ENCODE measurements at regions of chr5 and their contacts with region 1.

Region 1: DNA sequence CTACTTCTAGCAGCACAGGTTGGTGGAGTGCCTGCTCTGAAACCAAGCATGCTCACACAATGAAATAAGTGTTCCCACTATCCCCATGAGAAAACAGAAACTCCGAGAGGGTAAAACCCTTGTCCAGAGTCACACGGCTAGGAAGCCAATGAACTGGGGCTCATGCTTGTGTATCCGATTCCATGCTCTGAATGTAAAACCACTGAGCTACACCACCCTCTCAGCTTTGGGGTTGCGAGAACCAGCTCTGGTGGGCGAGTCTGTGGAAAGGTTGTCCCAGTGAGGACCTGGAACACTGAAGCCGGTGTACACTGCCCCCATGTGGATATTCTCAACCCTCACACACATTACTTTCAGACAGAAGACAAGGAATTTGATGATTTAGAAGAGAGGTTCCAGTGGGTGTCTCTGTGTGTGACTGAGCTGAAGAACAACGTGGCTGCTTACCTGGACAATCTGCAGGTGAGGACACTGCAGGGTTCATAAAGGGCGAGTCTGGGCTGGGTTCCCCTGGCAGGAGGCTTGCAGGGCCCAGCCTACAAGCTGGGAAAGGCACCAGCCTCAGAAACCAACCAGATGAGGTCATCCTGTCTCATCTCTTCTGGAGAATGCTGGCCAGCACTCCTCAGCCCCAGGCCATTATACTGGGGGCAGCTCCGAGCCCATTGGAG is 37.4 kb downstream of the ARHGEF37 start:
- DNase-seq: no peak
- H3K4me3 ChIP-seq: no peak overlapping the region
- CTCF ChIP-seq: peak; percentile 72

Region 2: GRCh38 chr5:149581192-149581861 is 37.4 kb before region 1 on chr5 and contains the start of gene ARHGEF37:
- CTCF ChIA-PET with region 1: interaction called, 36 read pairs
- POLR2A ChIA-PET with region 1: no interaction called
- DNase-seq: no peak
- H3K4me3 ChIP-seq: peak within 1 kb of the TSS; percentile 57
- CTCF ChIP-seq: no peak

Region 3: GRCh38 chr5:149596713-149597112 is 22.0 kb before region 1 on chr5:
- CTCF ChIA-PET with region 1: interaction called, 11 read pairs
- POLR2A ChIA-PET with region 1: no interaction called
- DNase-seq: no peak
- H3K4me3 ChIP-seq: no peak overlapping the region
- CTCF ChIP-seq: no peak

Region 4: DNA sequence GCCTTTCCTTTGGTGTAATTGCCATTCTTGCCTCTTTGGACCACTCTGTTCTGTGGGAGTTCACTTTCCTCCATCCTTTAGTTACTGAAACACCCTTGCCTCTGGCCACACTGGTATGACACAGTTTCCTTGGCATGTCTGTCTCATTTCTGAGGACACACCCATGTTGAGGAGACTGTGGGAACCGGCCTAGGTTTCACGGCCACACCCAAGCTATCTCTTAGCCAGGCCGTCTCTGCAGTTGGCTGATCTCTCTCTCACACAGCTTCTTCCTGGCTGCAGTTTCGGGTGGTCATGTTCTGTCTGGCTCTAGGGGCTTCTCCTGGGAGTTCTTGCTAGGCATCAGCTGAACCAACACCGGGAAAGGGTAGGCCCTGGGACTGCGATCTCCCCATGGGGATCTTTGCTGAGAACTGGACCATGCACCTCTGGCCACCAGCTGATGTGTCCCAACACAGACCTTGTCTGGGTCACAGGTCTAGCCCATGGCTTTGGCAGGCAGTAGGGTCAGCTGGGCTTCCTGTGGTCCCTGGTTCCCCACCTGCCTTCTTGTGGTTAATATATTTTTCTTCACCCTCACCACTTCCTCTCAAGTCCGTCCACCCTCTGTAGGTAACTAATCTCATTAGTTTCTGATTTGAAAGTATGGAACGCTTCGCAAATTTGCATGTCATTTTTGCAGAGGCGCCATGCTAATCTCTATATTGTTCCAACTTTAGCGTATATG is 12.6 kb before region 1 on chr5:
- CTCF ChIA-PET with region 1: interaction called, 72 read pairs
- POLR2A ChIA-PET with region 1: interaction called, 3 read pairs
- DNase-seq: no peak
- H3K4me3 ChIP-seq: no peak overlapping the region
- CTCF ChIP-seq: no peak

Region 5: GRCh38 chr5:149636851-149637246 is 18.1 kb after region 1 on chr5:
- CTCF ChIA-PET with region 1: interaction called, 19 read pairs
- POLR2A ChIA-PET with region 1: no interaction called
- DNase-seq: no peak
- H3K4me3 ChIP-seq: no peak overlapping the region
- CTCF ChIP-seq: peak; percentile 86

Region 6: DNA sequence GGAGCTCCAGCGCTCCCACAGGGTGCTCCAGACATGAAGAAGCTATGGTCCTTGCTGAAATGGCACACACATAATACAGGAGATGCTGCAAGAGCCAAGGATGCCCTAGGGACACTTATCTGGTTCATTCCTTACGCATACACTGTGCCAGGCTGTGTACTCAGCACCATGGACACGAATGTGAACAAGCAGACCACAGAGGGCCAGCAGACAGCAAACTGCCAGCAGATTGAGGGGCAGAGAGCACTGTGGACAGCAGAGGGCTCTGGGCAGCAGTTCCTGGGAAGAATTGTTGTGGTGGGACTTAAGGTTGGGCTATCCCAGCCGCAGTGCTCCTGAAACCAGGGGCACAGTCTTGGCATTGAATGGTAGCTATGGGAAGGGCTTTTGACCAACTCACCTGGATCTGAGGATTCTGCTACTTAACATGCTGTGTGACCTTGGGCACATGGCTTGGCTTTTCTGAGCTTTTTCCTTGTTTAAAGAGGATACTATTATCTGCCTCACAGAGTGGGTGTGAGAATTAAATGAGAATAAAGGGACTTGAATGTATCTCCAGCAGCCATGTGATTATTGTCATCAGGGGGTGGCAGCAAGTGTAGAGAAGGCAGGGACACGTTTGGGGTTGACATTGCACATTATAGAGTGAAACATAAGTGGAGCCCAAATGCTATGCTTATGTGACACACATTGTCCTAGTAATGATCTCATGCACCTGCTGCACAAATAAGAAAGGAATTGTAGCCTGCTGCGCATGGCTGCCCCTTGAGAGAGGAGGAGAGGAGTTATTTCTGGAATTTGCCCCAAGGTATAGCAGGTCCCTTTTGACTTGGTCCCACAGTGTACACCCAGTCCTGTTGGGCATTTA is 141.5 kb after region 1 on chr5:
- CTCF ChIA-PET with region 1: no interaction called
- POLR2A ChIA-PET with region 1: no interaction called
- DNase-seq: no peak
- H3K4me3 ChIP-seq: no peak overlapping the region
- CTCF ChIP-seq: peak; percentile 10